Activated CD4-positive, alpha-beta T cell treated with anti-CD3 and anti-CD28 coated beads, Interleukin-2, amount 10 ng/mL, durations not matched to agents 24 days and 14 days (primary cell): ENCODE measurements at regions of chr4 and their contacts with region 1.

Region 1: DNA sequence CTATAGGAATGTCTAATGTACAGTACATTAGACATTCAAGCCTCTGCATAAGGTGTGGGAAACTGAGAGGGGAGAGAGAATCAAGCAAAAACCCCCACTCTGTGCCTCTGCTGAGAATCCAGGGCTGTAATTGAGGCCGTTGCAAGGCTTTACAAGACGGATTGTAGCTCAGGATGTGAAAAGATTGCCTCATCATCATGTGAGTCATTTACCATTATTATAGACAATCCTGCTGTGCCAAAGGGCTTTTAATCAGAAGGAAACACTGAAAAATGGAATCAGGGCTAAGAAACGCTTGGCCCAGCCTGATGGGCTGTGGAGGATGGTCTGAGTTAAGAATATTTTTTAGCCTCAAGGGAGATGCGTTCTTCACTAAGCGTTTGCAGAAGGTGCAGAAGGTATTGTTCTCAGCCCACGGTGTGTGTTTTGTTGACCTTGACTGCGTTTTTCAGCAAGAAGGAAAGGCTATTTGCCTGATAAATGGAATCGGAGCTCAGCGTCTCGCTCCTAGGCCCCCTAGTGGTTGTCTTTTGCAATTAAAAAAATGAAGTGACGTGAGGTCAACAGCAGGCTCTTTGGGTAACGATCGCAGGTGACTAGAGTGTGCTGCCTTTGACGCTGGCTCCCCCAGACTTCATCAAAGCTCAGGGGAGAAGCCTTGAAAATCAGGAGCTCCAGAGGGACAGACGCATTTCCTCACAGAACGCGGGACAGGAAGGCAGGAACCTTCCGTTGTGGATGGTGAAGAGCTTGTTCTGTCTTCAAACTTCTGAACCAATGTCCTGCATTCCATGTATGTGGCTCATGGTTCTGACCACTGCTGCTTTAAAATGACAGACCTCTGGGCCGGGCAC is 18.1 kb upstream of the CHRNA9 start:
- DNase-seq: peak; percentile 91
- H3K4me3 Mint-ChIP-seq: peak overlapping the region; percentile 91
- H3K27ac Mint-ChIP-seq: peak overlapping the region; percentile 100
- H3K4me1 Mint-ChIP-seq: peaks cover 48% of the 10 kb centered on the region
- H3K27me3 Mint-ChIP-seq: no peaks in the 10 kb centered on the region

Region 2: DNA sequence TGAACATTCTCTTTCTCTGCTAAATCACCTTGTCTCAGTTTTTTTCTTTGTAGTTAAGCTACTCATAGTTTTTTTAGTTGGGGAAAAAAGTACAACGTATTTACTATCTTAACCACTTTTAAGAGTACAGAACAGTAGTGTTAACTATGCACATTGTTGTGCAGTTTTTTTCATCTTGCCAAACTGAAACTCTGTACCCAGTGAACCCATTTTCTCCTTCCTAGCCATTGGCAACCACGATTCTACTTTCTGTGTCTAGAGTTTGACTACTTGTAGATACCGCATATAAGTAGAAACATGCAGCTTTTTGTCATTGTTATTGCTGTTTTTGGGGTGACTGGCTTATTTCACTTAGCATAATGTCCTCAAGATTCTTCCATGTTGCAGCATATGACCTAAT is 250.4 kb before region 1 on chr4:
- intact Hi-C with region 1: no loop called
- DNase-seq: no peak
- H3K4me3 Mint-ChIP-seq: peak overlapping the region; percentile 28
- H3K27ac Mint-ChIP-seq: peak overlapping the region; percentile 72
- H3K4me1 Mint-ChIP-seq: peaks cover 38% of the 10 kb centered on the region
- H3K27me3 Mint-ChIP-seq: no peaks in the 10 kb centered on the region

Region 3: GRCh38 chr4:40149960-40150385 is 167.0 kb before region 1 on chr4:
- intact Hi-C with region 1: loop called (anchors 2 kb)
- DNase-seq: peak; percentile 92
- H3K4me3 Mint-ChIP-seq: no peak overlapping the region
- H3K27ac Mint-ChIP-seq: peak overlapping the region; percentile 22
- H3K4me1 Mint-ChIP-seq: peaks cover 6% of the 10 kb centered on the region
- H3K27me3 Mint-ChIP-seq: no peaks in the 10 kb centered on the region

Region 4: GRCh38 chr4:40199999-40200874 is 116.8 kb before region 1 on chr4:
- intact Hi-C with region 1: loop called (anchors 1 kb)
- DNase-seq: peak; percentile 93
- H3K4me3 Mint-ChIP-seq: peak overlapping the region; percentile 93
- H3K27ac Mint-ChIP-seq: peak overlapping the region; percentile 94
- H3K4me1 Mint-ChIP-seq: peaks cover 44% of the 10 kb centered on the region
- H3K27me3 Mint-ChIP-seq: no peaks in the 10 kb centered on the region

Region 5: DNA sequence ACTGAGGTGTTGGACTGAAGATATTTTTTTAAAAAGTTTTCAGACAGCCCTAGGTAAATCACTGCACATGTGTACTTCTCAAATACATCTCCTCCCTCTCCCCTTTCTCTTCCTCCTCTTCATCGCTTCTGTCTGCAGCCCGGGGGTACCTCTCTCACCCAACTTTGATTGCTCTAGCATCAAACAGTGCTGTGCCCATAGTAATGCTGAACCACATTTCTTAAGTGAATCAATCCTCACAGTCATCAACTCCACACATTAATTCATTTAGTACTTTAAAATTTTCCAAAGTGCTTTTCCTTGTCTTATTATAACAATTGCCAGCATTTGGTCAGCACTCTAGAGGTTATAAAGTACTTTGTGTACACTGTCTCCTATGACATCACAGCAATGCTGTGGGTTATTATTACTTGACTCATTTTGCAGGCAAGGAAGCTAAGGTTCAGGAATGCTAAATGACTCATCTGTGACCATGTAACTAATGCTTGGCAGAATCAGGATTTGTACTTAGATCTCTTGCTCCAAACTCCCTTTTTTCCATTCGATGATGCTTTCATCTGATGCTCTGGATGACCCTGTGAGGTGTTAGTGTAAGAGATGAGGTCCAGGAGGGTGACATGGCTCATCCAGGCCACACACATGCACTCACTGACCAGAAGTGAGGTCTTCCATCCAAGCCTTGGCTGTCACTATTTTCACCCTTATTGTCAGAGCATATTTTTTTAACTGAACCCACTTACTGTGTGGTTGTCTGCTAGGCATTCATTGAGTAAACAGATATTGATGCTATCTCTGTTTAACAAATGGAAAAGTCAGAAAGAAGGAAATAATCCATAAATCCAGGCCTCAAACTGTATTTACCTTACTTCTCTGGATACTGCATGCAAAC is 61.4 kb before region 1 on chr4:
- intact Hi-C with region 1: loop called (anchors 1 kb)
- DNase-seq: no peak
- H3K4me3 Mint-ChIP-seq: peak overlapping the region; percentile 53
- H3K27ac Mint-ChIP-seq: peak overlapping the region; percentile 80
- H3K4me1 Mint-ChIP-seq: peaks cover 55% of the 10 kb centered on the region
- H3K27me3 Mint-ChIP-seq: no peaks in the 10 kb centered on the region

Region 6: GRCh38 chr4:40301603-40302002 is 15.4 kb before region 1 on chr4:
- intact Hi-C with region 1: no loop called
- DNase-seq: peak; percentile 92
- H3K4me3 Mint-ChIP-seq: peak overlapping the region; percentile 80
- H3K27ac Mint-ChIP-seq: peak overlapping the region; percentile 91
- H3K4me1 Mint-ChIP-seq: peaks cover 69% of the 10 kb centered on the region
- H3K27me3 Mint-ChIP-seq: no peaks in the 10 kb centered on the region

Region 7: DNA sequence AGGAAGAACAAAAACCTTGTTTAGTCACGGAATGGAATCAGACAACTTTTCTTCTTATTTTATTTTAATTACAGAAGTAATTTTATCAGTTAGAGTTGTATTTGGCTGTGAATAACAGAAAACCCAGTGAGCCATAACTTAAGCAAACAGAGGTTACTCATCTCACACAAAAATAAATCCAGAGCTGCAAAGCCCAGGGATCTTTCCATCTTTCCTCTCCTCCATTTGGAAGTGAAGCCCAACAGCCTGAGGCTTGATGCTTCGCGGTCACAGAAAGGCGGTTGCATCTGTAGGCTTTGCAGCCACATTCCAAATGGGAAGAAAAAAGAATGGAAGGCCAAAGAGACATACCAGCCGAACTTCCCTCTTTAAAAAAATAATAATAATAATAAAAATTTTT is 40.7 kb after region 1 on chr4:
- intact Hi-C with region 1: no loop called
- DNase-seq: no peak
- H3K4me3 Mint-ChIP-seq: no peak overlapping the region
- H3K27ac Mint-ChIP-seq: no peak overlapping the region
- H3K4me1 Mint-ChIP-seq: no peaks in the 10 kb centered on the region
- H3K27me3 Mint-ChIP-seq: peaks cover 1% of the 10 kb centered on the region

Region 8: GRCh38 chr4:40699648-40700047 is 382.6 kb after region 1 on chr4:
- intact Hi-C with region 1: loop called (anchors 5 kb)
- DNase-seq: no peak
- H3K4me3 Mint-ChIP-seq: peak overlapping the region; percentile 4
- H3K27ac Mint-ChIP-seq: peak overlapping the region; percentile 67
- H3K4me1 Mint-ChIP-seq: peaks cover 26% of the 10 kb centered on the region
- H3K27me3 Mint-ChIP-seq: no peaks in the 10 kb centered on the region

Region 9: GRCh38 chr4:40840985-40841571 is 524.1 kb after region 1 on chr4:
- intact Hi-C with region 1: loop called (anchors 10 kb)
- DNase-seq: peak; percentile 92
- H3K4me3 Mint-ChIP-seq: no peak overlapping the region
- H3K27ac Mint-ChIP-seq: no peak overlapping the region
- H3K4me1 Mint-ChIP-seq: peaks cover 5% of the 10 kb centered on the region
- H3K27me3 Mint-ChIP-seq: peaks cover 10% of the 10 kb centered on the region

Region 10: GRCh38 chr4:40908702-40909362 is 591.8 kb after region 1 on chr4:
- intact Hi-C with region 1: loop called (anchors 1 kb)
- DNase-seq: peak; percentile 90
- H3K4me3 Mint-ChIP-seq: peak overlapping the region; percentile 49
- H3K27ac Mint-ChIP-seq: peak overlapping the region; percentile 91
- H3K4me1 Mint-ChIP-seq: peaks cover 26% of the 10 kb centered on the region
- H3K27me3 Mint-ChIP-seq: no peaks in the 10 kb centered on the region

Region 11: DNA sequence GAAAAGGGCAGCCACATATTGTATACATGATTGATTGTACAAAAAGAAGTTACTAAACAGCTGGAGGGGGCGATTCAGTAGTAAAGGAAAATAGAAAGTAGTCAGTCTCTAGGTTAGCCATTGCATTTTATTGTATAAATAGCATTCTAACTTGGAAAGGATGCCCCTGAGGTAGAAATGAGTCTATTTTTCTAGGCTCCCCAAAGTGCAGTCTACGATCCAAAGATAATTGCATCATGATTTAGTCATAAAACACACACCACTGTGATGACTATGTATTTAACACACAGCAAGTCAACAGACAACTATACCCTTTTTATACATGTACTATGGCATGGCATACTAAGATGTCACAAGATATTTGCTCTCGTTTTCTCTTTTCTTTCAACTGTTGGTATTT is 692.4 kb after region 1 on chr4:
- intact Hi-C with region 1: no loop called
- DNase-seq: no peak
- H3K4me3 Mint-ChIP-seq: no peak overlapping the region
- H3K27ac Mint-ChIP-seq: no peak overlapping the region
- H3K4me1 Mint-ChIP-seq: no peaks in the 10 kb centered on the region
- H3K27me3 Mint-ChIP-seq: no peaks in the 10 kb centered on the region